ENCODE measurements at regions of chr15 and their contacts with region 1.

Region 1: GRCh38 chr15:88638626-88639372 is at the start of gene ISG20:
- DNase-seq: peak; percentile 84 to 100 (median 99)
- ATAC-seq: peak; percentile 94
- H3K4me3 ChIP-seq: peak within 1 kb of the TSS; percentile 70
- H3K4me3 Mint-ChIP-seq: peak within 1 kb of the TSS; percentile 83 to 99 (median 94)
- H3K27ac ChIP-seq: peak within 1 kb of the TSS; percentile 99
- H3K27ac Mint-ChIP-seq: peak within 1 kb of the TSS; percentile 96 to 100 (median 99)
- H3K4me1 ChIP-seq: peaks cover 76 to 81% of the 10 kb centered on the region in 2 donors
- H3K4me1 Mint-ChIP-seq: peaks cover 58 to 87% (median 80%) of the 10 kb centered on the region in 7 donors
- H3K27me3 ChIP-seq: no peaks in the 10 kb centered on the region
- H3K27me3 Mint-ChIP-seq: peaks cover 0 to 2% (median 0%) of the 10 kb centered on the region in 5 donors
- total RNA-seq, gene ISG20: 92.5 to 160 (median 149) TPM

Region 2: GRCh38 chr15:87508086-87508485 is 1130.7 kb before region 1 on chr15:
- CTCF ChIA-PET with region 1: no interaction called
- POLR2A ChIA-PET with region 1: no interaction called
- intact Hi-C with region 1: no loop called
- DNase-seq: no peak
- ATAC-seq: no peak
- H3K4me3 ChIP-seq: no peak overlapping the region
- H3K4me3 Mint-ChIP-seq: no peak overlapping the region
- H3K27ac ChIP-seq: no peak overlapping the region
- H3K27ac Mint-ChIP-seq: no peak overlapping the region
- H3K4me1 ChIP-seq: no peaks in the 10 kb centered on the region
- H3K4me1 Mint-ChIP-seq: no peaks in the 10 kb centered on the region
- H3K27me3 ChIP-seq: no peaks in the 10 kb centered on the region
- H3K27me3 Mint-ChIP-seq: peaks cover 0 to 12% (median 0%) of the 10 kb centered on the region in 5 donors

Region 3: DNA sequence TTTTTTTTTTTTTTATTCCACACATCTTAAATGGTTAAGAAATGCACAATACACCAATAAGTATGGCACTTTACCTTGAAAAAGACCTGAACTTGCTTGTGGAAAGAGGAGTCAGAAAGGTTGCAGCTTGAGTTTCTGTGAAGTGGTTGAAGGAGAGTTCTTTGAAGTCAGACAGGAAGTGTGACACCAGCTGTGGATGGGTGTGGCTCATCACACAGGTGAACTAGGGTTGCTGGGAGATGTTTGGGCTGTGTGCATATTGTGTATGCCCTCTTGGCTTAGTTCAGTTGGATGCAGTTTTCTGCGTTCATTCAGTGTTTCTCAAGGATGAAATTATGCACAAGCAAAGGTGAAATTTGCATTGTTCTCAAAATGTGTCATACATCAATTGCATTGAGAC is 11.3 kb before region 1 on chr15:
- CTCF ChIA-PET with region 1: interaction called, 16 read pairs
- POLR2A ChIA-PET with region 1: interaction called, 51 read pairs
- intact Hi-C with region 1: loop called (anchors 1 kb)
- DNase-seq: peak in 7 of 9 donors; percentile 85 to 97 (median 95)
- ATAC-seq: peak; percentile 86
- H3K4me3 ChIP-seq: peak overlapping the region; percentile 40
- H3K4me3 Mint-ChIP-seq: peak overlapping the region; percentile 34 to 90 (median 68)
- H3K27ac ChIP-seq: peak overlapping the region; percentile 90
- H3K27ac Mint-ChIP-seq: peak overlapping the region; percentile 83 to 100 (median 98)
- H3K4me1 ChIP-seq: peaks cover 76 to 89% of the 10 kb centered on the region in 2 donors
- H3K4me1 Mint-ChIP-seq: peaks cover 57 to 100% (median 92%) of the 10 kb centered on the region in 7 donors
- H3K27me3 ChIP-seq: no peaks in the 10 kb centered on the region
- H3K27me3 Mint-ChIP-seq: no peaks in the 10 kb centered on the region

Region 4: DNA sequence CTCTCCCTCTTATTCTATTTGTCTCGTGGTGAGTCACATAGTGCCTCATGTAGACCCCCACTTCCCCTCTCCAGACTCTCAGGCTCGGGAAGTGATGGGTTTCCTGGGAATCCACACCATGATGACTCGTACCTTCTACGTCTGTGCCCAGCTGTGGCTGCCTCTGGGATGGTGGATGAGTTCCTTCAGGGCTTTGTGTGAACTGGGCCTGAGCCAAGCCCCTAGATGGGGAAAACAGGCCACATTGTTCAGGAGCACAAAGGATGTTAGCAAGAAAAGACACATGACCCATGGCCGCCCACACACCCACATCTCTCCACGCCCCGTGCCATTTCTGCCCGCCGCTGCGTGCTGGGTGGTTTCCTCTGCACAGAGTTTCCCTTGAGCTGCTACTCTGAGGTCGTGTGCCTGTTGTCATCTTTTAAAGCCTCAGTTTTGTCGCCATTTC is 10.5 kb after region 1 on chr15:
- CTCF ChIA-PET with region 1: interaction called, 7 read pairs
- POLR2A ChIA-PET with region 1: interaction called, 16 read pairs
- intact Hi-C with region 1: loop called in 1 of 2 experiments (anchors 1 kb)
- DNase-seq: peak in 8 of 9 donors; percentile 44 to 70 (median 60)
- ATAC-seq: peak; percentile 85
- H3K4me3 ChIP-seq: peak overlapping the region; percentile 23
- H3K4me3 Mint-ChIP-seq: peak overlapping the region; percentile 73 to 94 (median 83)
- H3K27ac ChIP-seq: peak overlapping the region; percentile 76
- H3K27ac Mint-ChIP-seq: peak overlapping the region; percentile 92 to 99 (median 97)
- H3K4me1 ChIP-seq: peaks cover 34 to 80% of the 10 kb centered on the region in 2 donors
- H3K4me1 Mint-ChIP-seq: peaks cover 54 to 96% (median 88%) of the 10 kb centered on the region in 7 donors
- H3K27me3 ChIP-seq: no peaks in the 10 kb centered on the region
- H3K27me3 Mint-ChIP-seq: no peaks in the 10 kb centered on the region

Region 5: GRCh38 chr15:88657326-88658069 is 18.7 kb after region 1 on chr15:
- CTCF ChIA-PET with region 1: interaction called, 10 read pairs
- POLR2A ChIA-PET with region 1: interaction called, 12 read pairs
- intact Hi-C with region 1: loop called in 1 of 2 experiments (anchors 1 kb)
- DNase-seq: no peak
- ATAC-seq: no peak
- H3K4me3 ChIP-seq: no peak overlapping the region
- H3K4me3 Mint-ChIP-seq: peak overlapping the region in 6 of 10 donors; percentile 38 to 74 (median 49)
- H3K27ac ChIP-seq: peak overlapping the region; percentile 59
- H3K27ac Mint-ChIP-seq: peak overlapping the region in 8 of 9 donors; percentile 71 to 92 (median 89)
- H3K4me1 ChIP-seq: peaks cover 16 to 81% of the 10 kb centered on the region in 2 donors
- H3K4me1 Mint-ChIP-seq: peaks cover 11 to 99% (median 85%) of the 10 kb centered on the region in 7 donors
- H3K27me3 ChIP-seq: no peaks in the 10 kb centered on the region
- H3K27me3 Mint-ChIP-seq: no peaks in the 10 kb centered on the region

Measured in naive thymus-derived CD4-positive, alpha-beta T cell (primary cell).